Left cardiac atrium (tissue), 4 donors: ENCODE measurements at regions of chr1 and their contacts with region 1.

Region 1: GRCh38 chr1:18109756-18110597 is 2.4 kb downstream of the IGSF21 start:
- DNase-seq: peak; percentile 55
- ATAC-seq: peak; percentile 41 to 48

Region 2: DNA sequence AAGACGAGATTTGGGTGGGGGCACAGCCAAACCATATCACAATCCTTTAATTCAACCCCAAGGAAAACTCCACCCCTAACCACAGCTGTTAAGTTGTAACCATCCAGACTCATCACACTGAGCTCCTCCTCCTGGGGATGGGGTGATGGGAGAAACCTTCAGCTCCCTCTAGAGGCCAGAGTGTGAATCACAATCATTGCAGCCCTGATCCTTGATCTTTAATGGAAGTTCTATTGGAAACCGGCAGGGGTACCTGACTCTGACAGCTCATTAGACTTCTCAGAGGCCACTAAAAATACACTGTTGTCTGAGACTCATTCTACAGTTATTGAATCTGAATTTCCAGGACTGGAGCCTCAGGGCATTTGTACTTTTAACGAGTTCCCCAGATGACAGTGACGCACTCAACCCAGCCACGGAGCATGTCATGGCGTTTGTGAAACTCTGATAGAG is 124.8 kb after region 1 on chr1:
- intact Hi-C with region 1: loop called in 1 of 2 experiments (anchors 10 kb)
- DNase-seq: no peak
- ATAC-seq: peak in 1 of 2 donors; percentile 67